Naive thymus-derived CD4-positive, alpha-beta T cell (primary cell): ENCODE measurements at regions of chr22 and their contacts with region 1.

Region 1: DNA sequence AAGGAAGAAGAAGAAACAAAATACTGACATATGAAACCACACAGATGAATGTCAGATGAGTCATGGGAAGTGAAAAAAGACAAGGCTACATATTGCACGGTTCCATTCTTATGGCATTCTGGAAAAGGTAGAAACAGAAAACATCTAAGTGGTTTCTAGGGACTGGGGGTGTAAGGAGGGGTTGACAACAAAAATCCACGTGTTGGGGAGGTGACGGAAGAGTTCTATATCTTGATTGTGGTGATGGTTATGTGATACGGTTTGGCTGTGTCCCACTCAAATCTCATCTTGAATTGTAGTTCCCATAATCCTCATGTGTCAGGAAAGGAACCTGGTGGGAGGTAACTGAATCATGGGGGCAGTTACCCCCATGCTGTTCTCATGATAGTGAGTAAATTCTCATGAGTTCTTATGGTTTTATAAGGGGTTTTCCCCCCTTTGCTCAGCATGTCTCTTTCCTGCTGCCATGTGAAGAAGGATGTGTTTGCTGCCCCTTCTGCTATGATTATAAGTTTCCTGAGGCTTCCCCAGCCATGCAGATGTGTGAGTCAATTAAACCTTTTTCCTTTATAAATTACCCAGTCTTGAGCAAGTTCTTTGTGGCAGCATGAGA is 6.4 kb upstream of the ARFGAP3 start:
- DNase-seq: peak in 1 of 9 donors; percentile 44
- ATAC-seq: peak; percentile 40
- H3K4me3 ChIP-seq: no peak overlapping the region
- H3K4me3 Mint-ChIP-seq: no peak overlapping the region
- H3K27ac ChIP-seq: no peak overlapping the region
- H3K27ac Mint-ChIP-seq: peak overlapping the region in 5 of 9 donors; percentile 0 to 39 (median 12)
- H3K4me1 ChIP-seq: no peaks in the 10 kb centered on the region
- H3K4me1 Mint-ChIP-seq: peaks cover 0 to 16% (median 9%) of the 10 kb centered on the region in 7 donors
- H3K27me3 ChIP-seq: no peaks in the 10 kb centered on the region
- H3K27me3 Mint-ChIP-seq: no peaks in the 10 kb centered on the region

Region 2: DNA sequence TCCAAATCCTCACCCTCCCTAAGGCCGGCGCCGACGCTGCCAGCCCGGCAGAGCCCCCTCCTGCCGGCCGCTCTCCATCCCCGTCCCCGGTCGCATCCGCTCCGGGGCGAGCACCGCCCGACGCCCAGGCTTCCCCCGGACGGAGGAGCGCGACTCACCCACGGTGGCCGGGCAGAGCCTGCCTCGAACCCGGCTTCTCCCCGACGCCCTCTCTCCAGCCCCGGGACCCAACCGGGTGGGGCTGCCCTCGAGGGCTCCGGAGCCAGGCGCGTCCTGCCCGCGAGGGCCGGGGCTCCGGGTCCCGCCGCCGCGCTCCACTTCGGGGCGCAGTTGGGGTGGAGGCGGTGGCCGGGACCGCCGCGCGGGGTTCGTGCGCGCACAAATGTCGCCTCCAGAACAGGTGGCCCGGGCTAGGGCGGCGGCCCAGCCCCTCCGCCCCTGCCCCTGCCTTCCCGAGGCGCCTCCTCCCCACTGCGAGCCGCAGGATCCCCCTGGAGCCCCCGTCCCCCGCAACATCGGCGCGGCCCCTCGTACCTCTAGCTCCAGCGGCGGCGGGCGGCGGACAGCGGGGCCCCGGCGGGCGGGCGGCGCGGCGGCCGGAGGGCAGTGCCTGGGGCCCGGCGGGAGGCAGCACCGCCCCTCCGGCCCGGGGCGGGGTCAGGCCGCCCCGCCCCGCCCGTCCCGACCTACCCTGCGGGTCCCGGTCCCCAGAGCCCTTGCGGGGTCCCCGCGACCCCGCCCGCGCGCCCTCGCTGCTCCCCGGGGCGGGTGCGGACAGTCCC is 143.0 kb before region 1 on chr22 and contains the start of gene A4GALT:
- CTCF ChIA-PET with region 1: no interaction called
- POLR2A ChIA-PET with region 1: no interaction called
- intact Hi-C with region 1: no loop called
- DNase-seq: peak in 3 of 9 donors; percentile 3 to 27 (median 8)
- ATAC-seq: peak; percentile 31
- H3K4me3 ChIP-seq: no peak within 1 kb of the TSS
- H3K4me3 Mint-ChIP-seq: peak within 1 kb of the TSS; percentile 70 to 84 (median 80)
- H3K27ac ChIP-seq: no peak within 1 kb of the TSS
- H3K27ac Mint-ChIP-seq: no peak within 1 kb of the TSS
- H3K4me1 ChIP-seq: peaks cover 0 to 7% of the 10 kb centered on the region in 2 donors
- H3K4me1 Mint-ChIP-seq: peaks cover 11 to 18% (median 14%) of the 10 kb centered on the region in 7 donors
- H3K27me3 ChIP-seq: peaks cover 0 to 12% of the 10 kb centered on the region in 2 donors
- H3K27me3 Mint-ChIP-seq: peaks cover 38 to 67% (median 61%) of the 10 kb centered on the region in 5 donors
- total RNA-seq, gene A4GALT: not detected

Region 3: DNA sequence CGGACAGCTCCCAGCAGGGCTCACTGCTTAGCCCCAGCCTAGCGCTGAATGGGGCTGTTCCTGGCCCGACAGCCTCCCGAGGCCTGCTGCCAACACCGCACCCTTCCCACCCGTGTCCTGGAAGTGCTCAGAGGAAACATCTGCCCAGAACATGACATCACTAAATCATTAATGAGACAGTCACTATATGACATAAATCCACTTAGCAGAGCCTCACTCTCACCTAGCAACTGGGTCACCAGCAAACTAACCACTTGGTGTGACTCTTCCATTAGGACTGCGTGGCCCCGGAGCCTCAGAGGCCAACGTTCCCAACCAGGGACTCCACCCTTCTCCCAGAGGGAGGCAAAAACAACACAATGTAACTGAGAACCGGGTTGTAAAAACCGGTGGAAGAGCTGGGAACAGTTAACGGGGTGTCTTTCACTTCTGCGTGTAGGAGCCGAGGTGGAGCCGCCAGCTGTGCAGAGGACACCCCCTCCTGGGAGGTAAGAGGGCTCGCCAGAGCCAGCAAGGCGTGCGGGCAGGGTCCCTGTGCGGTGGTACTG is 172.9 kb after region 1 on chr22:
- CTCF ChIA-PET with region 1: interaction called, 7 read pairs
- POLR2A ChIA-PET with region 1: no interaction called
- intact Hi-C with region 1: loop called in 1 of 2 experiments (anchors 1 kb)
- DNase-seq: no peak
- ATAC-seq: no peak
- H3K4me3 ChIP-seq: no peak overlapping the region
- H3K4me3 Mint-ChIP-seq: no peak overlapping the region
- H3K27ac ChIP-seq: no peak overlapping the region
- H3K27ac Mint-ChIP-seq: no peak overlapping the region
- H3K4me1 ChIP-seq: no peaks in the 10 kb centered on the region
- H3K4me1 Mint-ChIP-seq: peaks cover 0 to 8% (median 3%) of the 10 kb centered on the region in 7 donors
- H3K27me3 ChIP-seq: no peaks in the 10 kb centered on the region
- H3K27me3 Mint-ChIP-seq: no peaks in the 10 kb centered on the region